ENCODE measurements at regions of chr1 and their contacts with region 1.

Region 1: GRCh38 chr1:26602378-26602959 is 72.9 kb downstream of the RPS6KA1 start:
- DNase-seq: no peak
- H3K4me3 ChIP-seq: no peak overlapping the region
- CTCF ChIP-seq: peak; percentile 47

Region 2: DNA sequence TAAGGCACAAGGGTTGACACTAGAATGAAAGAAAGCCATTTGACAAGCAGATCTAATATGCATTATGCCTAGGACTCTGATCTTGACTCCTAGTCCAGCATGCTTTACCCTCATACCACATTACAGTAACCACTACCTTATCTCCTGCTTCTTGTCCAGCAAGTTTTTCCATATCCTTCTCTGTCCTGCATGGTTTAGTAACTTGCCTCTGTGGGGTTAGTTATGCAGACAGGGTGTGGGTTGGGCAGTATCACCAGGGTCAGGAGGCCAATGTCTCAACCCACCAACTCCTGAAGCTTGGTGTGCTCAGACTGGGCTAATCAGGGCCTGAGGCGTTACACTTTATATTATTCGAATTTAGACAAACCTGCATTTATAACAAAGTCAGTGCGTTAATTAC is 151.6 kb before region 1 on chr1:
- CTCF ChIA-PET with region 1: no interaction called
- POLR2A ChIA-PET with region 1: no interaction called
- DNase-seq: no peak
- H3K4me3 ChIP-seq: no peak overlapping the region
- CTCF ChIP-seq: no peak

Region 3: DNA sequence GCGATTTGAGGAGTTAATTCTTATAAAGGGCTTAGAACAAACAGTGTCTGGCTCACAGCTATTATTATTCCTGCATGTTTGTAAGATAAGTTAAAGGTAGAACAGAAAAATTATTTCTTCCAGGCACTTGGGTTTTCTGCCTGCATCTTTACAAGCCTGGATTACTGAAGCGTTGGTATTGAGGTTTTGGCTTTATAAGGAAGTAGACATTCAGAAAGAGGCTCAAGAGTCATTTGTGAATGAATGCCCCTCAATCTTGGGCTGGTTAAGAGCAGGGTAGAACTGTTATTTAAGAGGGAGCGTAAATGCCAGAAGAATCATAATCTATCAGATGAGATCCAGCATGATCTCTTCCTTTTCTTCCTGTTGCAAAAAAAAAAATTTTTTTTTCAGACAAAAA is 16.1 kb after region 1 on chr1:
- CTCF ChIA-PET with region 1: no interaction called
- POLR2A ChIA-PET with region 1: no interaction called
- DNase-seq: no peak
- H3K4me3 ChIP-seq: no peak overlapping the region
- CTCF ChIP-seq: no peak

Region 4: DNA sequence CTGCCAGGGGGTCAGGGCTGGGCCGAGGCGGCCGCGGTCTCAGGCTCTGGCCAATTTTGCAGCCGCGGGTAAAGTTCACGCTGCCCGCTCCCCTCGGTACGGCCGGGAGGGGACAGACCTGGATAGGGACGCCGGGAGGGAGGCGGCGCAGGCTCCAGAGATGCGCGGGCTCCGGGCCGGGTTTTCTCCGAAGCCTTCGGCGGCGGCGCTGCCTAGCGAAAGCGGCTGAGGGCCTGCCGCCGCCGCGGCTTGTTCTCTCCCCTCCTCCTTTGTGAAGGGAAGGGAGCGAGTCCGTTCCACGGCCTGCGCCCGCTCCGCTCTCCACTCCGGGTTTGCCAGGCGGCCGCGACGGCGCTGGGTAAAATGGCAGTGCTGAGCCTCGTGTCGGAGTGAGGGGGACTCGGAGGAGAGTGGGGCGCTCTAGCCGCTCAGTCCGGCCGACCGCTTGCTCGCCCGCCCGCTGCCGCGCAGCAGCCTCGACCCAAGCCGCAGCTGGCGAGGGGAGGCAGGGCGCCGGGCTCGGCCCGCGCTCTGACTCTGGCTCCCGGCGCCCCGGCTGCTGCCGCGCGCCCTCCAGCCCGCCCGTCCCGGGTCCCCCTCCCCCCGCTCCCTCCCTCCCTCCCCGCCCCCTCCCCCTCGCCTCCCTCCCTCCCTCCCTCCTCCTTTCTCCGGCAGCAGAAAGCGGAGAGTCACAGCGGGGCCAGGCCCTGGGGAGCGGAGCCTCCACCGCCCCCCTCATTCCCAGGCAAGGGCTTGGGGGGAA is 93.1 kb after region 1 on chr1 and contains the start of gene ARID1A:
- CTCF ChIA-PET with region 1: interaction called, 23 read pairs
- POLR2A ChIA-PET with region 1: no interaction called
- DNase-seq: peak; percentile 85
- H3K4me3 ChIP-seq: peak within 1 kb of the TSS; percentile 69
- CTCF ChIP-seq: no peak

Region 5: GRCh38 chr1:26787706-26788514 is 185.4 kb after region 1 on chr1 and contains the start of gene PIGV:
- CTCF ChIA-PET with region 1: interaction called, 509 read pairs
- POLR2A ChIA-PET with region 1: interaction called, 6 read pairs
- DNase-seq: no peak
- H3K4me3 ChIP-seq: peak within 1 kb of the TSS; percentile 73
- CTCF ChIP-seq: no peak

Region 6: DNA sequence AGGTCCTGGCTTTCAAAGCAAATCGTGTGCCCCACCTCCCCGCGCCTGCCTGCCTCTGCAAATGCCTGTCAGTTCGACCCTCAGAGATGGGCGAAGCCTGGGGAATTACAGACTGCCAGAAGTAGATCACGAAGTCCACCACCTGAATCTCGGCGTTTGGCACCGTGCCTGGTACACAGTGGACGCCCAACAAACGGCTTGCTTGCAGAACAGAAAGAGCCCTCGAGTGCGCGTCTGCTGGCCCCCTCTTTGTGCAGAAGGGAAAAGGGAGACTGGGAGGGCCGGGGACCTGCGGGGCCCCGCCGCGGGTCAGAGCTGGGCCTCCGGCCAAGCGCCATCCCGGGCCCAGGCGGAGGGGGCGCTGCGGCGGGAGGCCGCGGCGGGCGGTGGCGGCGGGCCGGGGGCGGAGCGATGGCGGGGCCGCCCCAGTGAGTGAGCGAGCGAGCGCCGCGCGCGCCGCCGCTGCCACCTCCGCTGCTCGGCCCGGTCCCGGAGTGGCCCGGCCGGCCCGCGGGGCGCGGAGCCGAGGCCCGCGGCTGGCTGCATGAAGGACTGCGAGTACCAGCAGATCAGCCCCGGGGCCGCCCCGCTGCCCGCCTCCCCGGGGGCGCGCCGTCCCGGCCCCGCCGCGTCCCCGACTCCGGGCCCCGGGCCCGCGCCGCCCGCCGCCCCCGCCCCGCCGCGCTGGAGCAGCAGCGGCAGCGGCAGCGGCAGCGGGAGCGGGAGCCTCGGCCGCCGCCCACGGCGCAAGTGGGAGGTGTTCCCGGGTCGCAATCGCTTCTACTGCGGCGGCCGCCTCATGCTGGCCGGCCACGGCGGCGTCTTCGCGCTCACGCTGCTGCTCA is 224.0 kb after region 1 on chr1 and contains the start of gene ZDHHC18:
- CTCF ChIA-PET with region 1: interaction called, 15 read pairs
- POLR2A ChIA-PET with region 1: no interaction called
- DNase-seq: no peak
- H3K4me3 ChIP-seq: peak within 1 kb of the TSS; percentile 69
- CTCF ChIP-seq: peak; percentile 52

Region 7: DNA sequence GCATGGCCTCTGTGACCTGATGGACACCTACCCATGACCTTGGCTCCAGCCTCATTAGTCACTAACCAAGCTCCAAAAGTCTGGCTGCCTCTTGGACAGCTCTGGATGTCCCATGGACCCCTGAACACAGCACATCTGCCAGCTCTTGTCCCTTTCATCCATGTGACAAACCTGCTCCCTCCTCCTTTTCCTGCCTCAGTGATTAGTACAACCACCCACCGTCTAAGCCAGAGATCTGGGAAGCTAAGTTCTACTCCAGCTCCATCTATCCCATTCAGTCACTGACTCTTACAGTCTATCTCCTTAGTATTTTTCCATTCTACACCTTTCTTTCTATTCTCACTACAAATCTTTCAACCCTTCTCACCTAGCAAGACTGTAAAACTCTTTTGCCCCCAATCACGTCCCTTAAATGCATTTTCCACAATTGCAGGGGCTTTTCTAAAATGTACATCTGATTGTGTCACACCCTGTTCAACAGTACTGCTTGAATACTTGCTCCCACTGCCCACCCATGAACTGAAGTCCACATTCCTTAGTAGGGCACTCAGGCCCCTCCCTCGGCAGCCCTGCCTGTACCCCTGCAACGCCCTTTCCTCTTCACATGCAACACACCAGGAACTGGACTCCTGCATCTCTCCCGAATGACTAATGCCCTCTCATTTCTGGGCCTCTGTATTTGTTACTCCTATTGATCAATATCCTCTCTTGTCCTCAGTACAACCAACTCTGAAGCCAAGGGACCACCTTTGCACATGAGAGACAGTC is 280.4 kb after region 1 on chr1:
- CTCF ChIA-PET with region 1: interaction called, 205 read pairs
- POLR2A ChIA-PET with region 1: interaction called, 3 read pairs
- DNase-seq: no peak
- H3K4me3 ChIP-seq: no peak overlapping the region
- CTCF ChIP-seq: no peak